CD8-positive, alpha-beta T cell (primary cell): ENCODE measurements at regions of chr19 and their contacts with region 1.

Region 1: DNA sequence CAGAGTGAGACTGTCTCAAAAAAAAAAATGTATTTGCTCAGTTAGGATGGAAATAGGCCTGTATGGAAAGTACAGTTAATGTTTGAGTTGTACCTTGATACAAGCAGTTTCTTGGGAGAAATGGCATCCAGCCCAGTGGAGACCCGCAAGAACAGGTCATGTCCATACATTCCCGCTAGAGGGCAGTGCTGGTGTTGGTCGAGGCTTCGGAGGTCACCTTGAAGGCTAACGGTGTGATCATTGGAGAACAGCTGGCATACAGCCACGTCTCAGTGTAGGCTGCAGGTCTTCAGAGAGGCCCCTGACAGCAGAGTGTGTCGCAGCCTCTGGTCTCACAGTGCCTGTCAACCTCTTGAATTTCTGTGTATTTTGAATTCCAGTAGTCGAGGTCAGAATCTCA is 7.5 kb downstream of the ZNF610 start:
- DNase-seq: peak in 8 of 9 experiments; percentile 19 to 72 (median 48)
- ATAC-seq: peak; percentile 73
- H3K4me3 ChIP-seq: no peak overlapping the region
- H3K4me3 Mint-ChIP-seq: no peak overlapping the region
- H3K27ac ChIP-seq: no peak overlapping the region
- H3K27ac Mint-ChIP-seq: no peak overlapping the region
- H3K4me1 ChIP-seq: no peaks in the 10 kb centered on the region
- H3K4me1 Mint-ChIP-seq: peaks cover 4% of the 10 kb centered on the region
- H3K27me3 ChIP-seq: no peaks in the 10 kb centered on the region
- H3K27me3 Mint-ChIP-seq: no peaks in the 10 kb centered on the region
- CTCF ChIP-seq: peak; percentile 48

Region 2: GRCh38 chr19:52248241-52248640 is 95.3 kb before region 1 on chr19:
- CTCF ChIA-PET with region 1: no interaction called
- POLR2A ChIA-PET with region 1: no interaction called
- intact Hi-C with region 1: loop called in 1 of 2 experiments (anchors 5 kb)
- DNase-seq: peak; percentile 39 to 74 (median 67)
- ATAC-seq: peak; percentile 70
- H3K4me3 ChIP-seq: no peak overlapping the region
- H3K4me3 Mint-ChIP-seq: no peak overlapping the region
- H3K27ac ChIP-seq: no peak overlapping the region
- H3K27ac Mint-ChIP-seq: no peak overlapping the region
- H3K4me1 ChIP-seq: no peaks in the 10 kb centered on the region
- H3K4me1 Mint-ChIP-seq: no peaks in the 10 kb centered on the region
- H3K27me3 ChIP-seq: no peaks in the 10 kb centered on the region
- H3K27me3 Mint-ChIP-seq: no peaks in the 10 kb centered on the region
- CTCF ChIP-seq: peak; percentile 45

Region 3: GRCh38 chr19:52695996-52696395 is 352.4 kb after region 1 on chr19:
- CTCF ChIA-PET with region 1: no interaction called
- POLR2A ChIA-PET with region 1: no interaction called
- intact Hi-C with region 1: loop called in 1 of 2 experiments (anchors 5 kb)
- DNase-seq: no peak
- ATAC-seq: no peak
- H3K4me3 ChIP-seq: no peak overlapping the region
- H3K4me3 Mint-ChIP-seq: no peak overlapping the region
- H3K27ac ChIP-seq: no peak overlapping the region
- H3K27ac Mint-ChIP-seq: no peak overlapping the region
- H3K4me1 ChIP-seq: peaks cover 5% of the 10 kb centered on the region
- H3K4me1 Mint-ChIP-seq: no peaks in the 10 kb centered on the region
- H3K27me3 ChIP-seq: no peaks in the 10 kb centered on the region
- H3K27me3 Mint-ChIP-seq: no peaks in the 10 kb centered on the region
- CTCF ChIP-seq: no peak

Region 4: DNA sequence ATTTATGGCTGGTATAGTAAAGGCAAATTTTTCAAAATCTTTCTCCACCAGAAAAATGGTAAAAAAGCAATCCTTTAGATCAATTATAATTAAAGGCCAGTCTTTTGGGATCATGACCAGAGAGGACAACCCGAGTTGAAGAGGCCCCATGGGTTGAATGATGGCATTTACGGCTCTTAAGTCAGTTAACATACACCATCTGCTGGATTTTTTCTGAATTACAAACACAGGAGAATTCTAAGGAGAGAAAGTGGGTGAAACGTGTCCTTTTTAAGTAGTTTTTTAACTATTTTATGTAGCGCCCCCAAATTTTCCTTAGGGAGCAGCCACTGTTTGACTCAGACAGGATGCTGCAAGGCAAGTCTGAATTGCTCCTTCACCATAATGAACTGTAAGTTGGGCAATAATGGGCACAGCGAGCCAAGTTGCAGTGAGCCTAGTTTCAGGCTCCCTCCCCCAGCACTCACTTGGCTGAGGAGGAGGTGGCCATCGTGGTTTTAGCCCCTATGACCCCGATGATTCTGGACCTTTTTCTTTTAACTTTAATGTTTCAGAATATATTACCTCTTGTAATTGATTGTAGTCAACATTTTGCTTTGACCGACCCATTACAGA is 404.9 kb after region 1 on chr19:
- CTCF ChIA-PET with region 1: interaction called, 6 read pairs
- POLR2A ChIA-PET with region 1: no interaction called
- intact Hi-C with region 1: loop called (anchors 1 to 5 kb)
- DNase-seq: peak in 3 of 9 experiments; percentile 33 to 76 (median 65)
- ATAC-seq: peak; percentile 46
- H3K4me3 ChIP-seq: no peak overlapping the region
- H3K4me3 Mint-ChIP-seq: no peak overlapping the region
- H3K27ac ChIP-seq: no peak overlapping the region
- H3K27ac Mint-ChIP-seq: no peak overlapping the region
- H3K4me1 ChIP-seq: no peaks in the 10 kb centered on the region
- H3K4me1 Mint-ChIP-seq: peaks cover 11% of the 10 kb centered on the region
- H3K27me3 ChIP-seq: no peaks in the 10 kb centered on the region
- H3K27me3 Mint-ChIP-seq: no peaks in the 10 kb centered on the region
- CTCF ChIP-seq: peak; percentile 68